Activated CD8-positive, alpha-beta memory T cell treated with anti-CD3 and anti-CD28 coated beads, Interleukin-2, amount 10 ng/mL, durations not matched to agents 7 days and 5 days (primary cell): ENCODE measurements at regions of chr4 and their contacts with region 1.

Region 1: DNA sequence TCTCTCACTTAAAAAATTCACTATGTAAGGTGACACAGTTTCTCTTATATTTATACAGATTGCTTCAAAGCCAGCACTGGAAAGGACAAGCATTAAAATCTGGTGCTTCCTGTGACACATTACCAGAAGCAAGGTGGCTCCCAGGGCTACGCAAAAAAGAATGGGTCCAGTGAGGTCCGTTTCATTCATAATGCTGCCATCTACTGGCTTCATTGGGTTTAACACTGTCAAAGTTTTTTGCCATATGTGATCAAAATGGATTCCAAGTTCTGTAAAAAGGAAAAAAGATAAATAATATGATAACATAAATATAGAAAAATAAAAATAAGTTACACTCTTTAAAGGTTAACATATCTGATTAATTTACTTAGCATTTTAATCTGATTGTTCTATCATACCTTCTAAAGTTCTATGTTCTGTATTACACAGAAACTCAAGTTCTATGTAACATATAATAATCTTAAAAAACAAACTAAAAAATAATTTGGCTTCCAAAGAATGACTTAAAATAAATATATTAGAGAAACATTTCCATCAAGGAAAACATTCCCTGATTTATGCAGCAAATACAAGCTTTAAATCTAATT is 22.1 kb downstream of the YIPF7 start:
- DNase-seq: peak; percentile 57
- ATAC-seq: peak; percentile 69
- H3K4me3 Mint-ChIP-seq: no peak overlapping the region
- H3K27ac Mint-ChIP-seq: no peak overlapping the region
- H3K4me1 Mint-ChIP-seq: no peaks in the 10 kb centered on the region
- H3K27me3 Mint-ChIP-seq: no peaks in the 10 kb centered on the region

Region 2: GRCh38 chr4:44448548-44449461 is 180.6 kb before region 1 on chr4 and contains the start of gene KCTD8:
- CTCF ChIA-PET with region 1: interaction called, 10 read pairs
- DNase-seq: peak; percentile 72
- ATAC-seq: peak; percentile 88
- H3K4me3 Mint-ChIP-seq: peak within 1 kb of the TSS; percentile 55
- H3K27ac Mint-ChIP-seq: no peak within 1 kb of the TSS
- H3K4me1 Mint-ChIP-seq: peaks cover 4% of the 10 kb centered on the region
- H3K27me3 Mint-ChIP-seq: peaks cover 50% of the 10 kb centered on the region
- total RNA-seq, gene KCTD8: not detected

Region 3: DNA sequence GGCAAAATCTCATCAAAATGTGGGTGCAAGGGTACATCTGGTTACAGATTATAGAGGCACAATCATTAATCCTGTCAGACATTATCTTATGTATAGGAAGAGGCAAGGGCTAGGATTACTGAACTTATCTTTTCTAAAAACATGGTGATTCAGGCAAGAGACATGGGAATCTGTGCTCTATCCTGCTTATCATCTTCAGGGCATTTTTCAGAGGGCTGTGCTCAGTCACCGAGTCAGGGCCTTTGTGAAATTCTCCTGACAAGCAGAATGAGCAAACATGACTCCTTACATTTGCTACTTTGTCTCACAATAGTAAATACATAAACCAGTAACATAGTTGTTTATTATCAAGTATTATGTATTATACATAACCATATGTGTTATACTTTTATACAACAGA is 96.5 kb before region 1 on chr4:
- CTCF ChIA-PET with region 1: no interaction called
- DNase-seq: no peak
- ATAC-seq: no peak
- H3K4me3 Mint-ChIP-seq: no peak overlapping the region
- H3K27ac Mint-ChIP-seq: no peak overlapping the region
- H3K4me1 Mint-ChIP-seq: no peaks in the 10 kb centered on the region
- H3K27me3 Mint-ChIP-seq: no peaks in the 10 kb centered on the region

Region 4: DNA sequence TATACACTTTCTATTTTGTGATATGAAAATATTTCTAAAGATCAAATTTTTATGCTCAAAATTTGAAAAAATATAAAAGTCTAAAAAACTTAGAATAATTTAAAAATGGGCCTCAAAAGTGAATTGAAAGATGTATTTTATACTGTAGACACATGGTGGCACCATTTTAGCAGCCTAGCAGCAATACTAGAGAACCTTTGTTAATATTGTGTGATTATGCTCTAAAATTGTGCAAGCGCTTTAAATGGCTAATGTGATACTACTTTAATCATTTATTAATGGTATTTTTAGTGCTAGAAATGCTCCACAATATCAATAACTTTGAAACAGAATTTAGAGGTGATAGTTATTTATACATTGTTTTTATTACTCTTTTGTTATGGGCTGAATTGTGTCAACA is 45.1 kb after region 1 on chr4:
- CTCF ChIA-PET with region 1: no interaction called
- DNase-seq: no peak
- ATAC-seq: no peak
- H3K4me3 Mint-ChIP-seq: no peak overlapping the region
- H3K27ac Mint-ChIP-seq: no peak overlapping the region
- H3K4me1 Mint-ChIP-seq: peaks cover 13% of the 10 kb centered on the region
- H3K27me3 Mint-ChIP-seq: peaks cover 8% of the 10 kb centered on the region